Activated B cell treated with CpG ODN at 0.5 μM for 24 hours (primary cell): ENCODE measurements at regions of chr15 and their contacts with region 1.

Region 1: GRCh38 chr15:84600851-84601838 is at the start of gene ZSCAN2:
- DNase-seq: peak; percentile 86
- ATAC-seq: peak; percentile 94
- H3K4me3 Mint-ChIP-seq: peak within 1 kb of the TSS; percentile 97
- H3K27ac Mint-ChIP-seq: peak within 1 kb of the TSS; percentile 88
- H3K4me1 Mint-ChIP-seq: peaks cover 73% of the 10 kb centered on the region
- H3K27me3 Mint-ChIP-seq: no peaks in the 10 kb centered on the region
- CTCF ChIP-seq: no peak
- total RNA-seq, gene ZSCAN2: 16.0 and 18.7 TPM in 2 replicates

Region 2: GRCh38 chr15:84633311-84634227 is 32.4 kb after region 1 on chr15:
- CTCF ChIA-PET with region 1: interaction called, 9 read pairs
- POLR2A ChIA-PET with region 1: interaction called, 22 read pairs
- intact Hi-C with region 1: loop called (anchors 1 kb)
- DNase-seq: peak; percentile 67
- ATAC-seq: peak; percentile 45
- H3K4me3 Mint-ChIP-seq: peak overlapping the region; percentile 91
- H3K27ac Mint-ChIP-seq: peak overlapping the region; percentile 87
- H3K4me1 Mint-ChIP-seq: peaks cover 50% of the 10 kb centered on the region
- H3K27me3 Mint-ChIP-seq: no peaks in the 10 kb centered on the region
- CTCF ChIP-seq: no peak